Left cardiac atrium (tissue), 4 donors: ENCODE measurements at regions of chr9 and their contacts with region 1.

Region 1: GRCh38 chr9:114653556-114654159 is 3.9 kb downstream of the TEX53 start:
- DNase-seq: peak; percentile 66
- ATAC-seq: peak; percentile 82 to 87

Region 2: GRCh38 chr9:114405294-114406034 is 248.2 kb before region 1 on chr9:
- intact Hi-C with region 1: loop called (anchors 2 to 10 kb)
- DNase-seq: peak; percentile 79
- ATAC-seq: peak; percentile 92 to 93

Region 3: DNA sequence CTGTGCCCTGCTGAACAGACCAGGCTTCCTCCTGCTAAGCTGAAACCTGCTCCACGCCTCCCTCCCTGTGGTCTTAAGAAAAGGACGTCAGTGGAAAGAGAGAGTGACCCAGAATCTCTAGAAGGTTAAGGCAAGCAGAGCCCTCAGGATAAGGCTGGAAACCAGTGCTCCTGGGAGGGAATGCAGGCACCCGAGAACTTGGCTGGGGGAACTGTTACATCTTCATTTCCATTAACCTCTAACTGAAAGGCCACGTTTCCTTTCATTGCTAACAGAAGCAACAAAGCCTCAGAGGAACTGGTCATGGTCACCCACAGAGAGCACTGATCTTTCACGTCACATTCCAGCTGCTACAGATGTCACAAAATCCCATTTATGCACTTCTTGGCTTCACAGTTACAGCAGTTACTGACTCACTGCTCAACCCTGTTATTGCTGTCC is 239.8 kb before region 1 on chr9:
- intact Hi-C with region 1: loop called in 1 of 2 experiments (anchors 10 kb)
- DNase-seq: no peak
- ATAC-seq: peak in 1 of 2 donors; percentile 23

Region 4: DNA sequence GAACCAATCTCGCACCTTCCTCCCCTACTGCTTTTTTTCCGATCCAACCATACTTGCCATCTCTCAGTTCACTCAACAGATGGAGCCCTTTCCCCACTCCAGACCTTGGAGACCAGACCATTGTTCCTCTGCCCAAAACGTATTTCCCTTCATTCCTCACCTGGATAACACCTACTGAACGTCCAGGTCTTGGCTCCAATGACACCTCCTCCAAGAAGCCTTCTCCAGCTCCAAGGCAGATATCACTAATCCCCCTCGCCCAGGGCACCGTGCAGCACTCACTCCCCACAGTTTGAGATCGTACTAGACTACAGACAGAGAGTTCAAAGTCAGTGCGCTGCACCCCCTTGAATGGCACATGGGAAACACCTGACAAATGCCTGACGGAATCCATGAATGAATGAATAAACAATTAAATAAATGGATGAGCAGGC is 218.8 kb before region 1 on chr9:
- intact Hi-C with region 1: loop called in 1 of 2 experiments (anchors 10 kb)
- DNase-seq: no peak
- ATAC-seq: peak; percentile 19 to 61

Region 5: GRCh38 chr9:114487607-114488300 is 165.9 kb before region 1 on chr9:
- intact Hi-C with region 1: loop called in 1 of 2 experiments (anchors 1 kb)
- DNase-seq: peak; percentile 41
- ATAC-seq: peak; percentile 89 to 95